ENCODE measurements at regions of chr4 and their contacts with region 1.

Region 1: DNA sequence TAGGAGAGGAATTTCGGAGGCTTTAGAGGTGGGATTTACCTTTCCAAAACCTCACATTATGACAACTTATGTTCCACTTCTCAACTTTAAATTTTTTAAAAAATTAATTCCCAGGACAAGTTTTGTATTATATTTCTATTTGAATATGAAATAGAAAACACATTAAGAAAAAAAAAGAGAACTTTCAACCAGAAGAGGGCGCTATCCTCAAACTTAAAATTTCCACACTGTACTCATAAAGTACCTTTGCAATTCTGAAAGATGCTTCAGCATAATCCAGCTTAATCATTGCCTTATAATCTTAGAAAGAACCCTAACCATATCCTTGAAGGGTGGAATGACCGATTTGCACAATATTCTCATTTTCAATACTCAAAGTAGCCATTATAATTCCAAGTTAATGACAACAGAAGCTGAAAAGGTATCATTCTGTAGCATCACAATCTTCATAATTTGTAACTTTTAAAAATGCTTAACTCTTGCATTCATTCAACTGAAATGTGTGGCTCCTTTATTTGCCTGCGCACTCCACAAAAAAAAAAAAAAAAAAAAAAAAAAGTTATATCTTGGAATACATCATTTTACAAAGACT is 158.0 kb downstream of the KCNIP4 start:
- DNase-seq: no peak
- H3K4me3 ChIP-seq: no peak overlapping the region
- H3K27ac ChIP-seq: no peak overlapping the region
- H3K4me1 ChIP-seq: no peaks in the 10 kb centered on the region
- H3K27me3 ChIP-seq: no peaks in the 10 kb centered on the region
- CTCF ChIP-seq: peak; percentile 22 to 52 (median 36)
- EP300 ChIP-seq: no peak
- POLR2A ChIP-seq: no peak

Region 2: GRCh38 chr4:21948347-21949072 is 158.0 kb after region 1 on chr4 and contains the start of gene KCNIP4:
- intact Hi-C with region 1: loop called (anchors 5 kb)
- DNase-seq: no peak
- H3K4me3 ChIP-seq: peak within 1 kb of the TSS; percentile 57 to 69 (median 60)
- H3K27ac ChIP-seq: peak within 1 kb of the TSS in 1 of 4 donors; percentile 56
- H3K4me1 ChIP-seq: peaks cover 0 to 13% (median 5%) of the 10 kb centered on the region in 4 donors
- H3K27me3 ChIP-seq: peaks cover 0 to 18% (median 0%) of the 10 kb centered on the region in 3 donors
- CTCF ChIP-seq: no peak
- EP300 ChIP-seq: no peak
- POLR2A ChIP-seq: no peak
- total RNA-seq, gene KCNIP4: 9.1 to 28.5 (median 19.4) TPM

Region 3: DNA sequence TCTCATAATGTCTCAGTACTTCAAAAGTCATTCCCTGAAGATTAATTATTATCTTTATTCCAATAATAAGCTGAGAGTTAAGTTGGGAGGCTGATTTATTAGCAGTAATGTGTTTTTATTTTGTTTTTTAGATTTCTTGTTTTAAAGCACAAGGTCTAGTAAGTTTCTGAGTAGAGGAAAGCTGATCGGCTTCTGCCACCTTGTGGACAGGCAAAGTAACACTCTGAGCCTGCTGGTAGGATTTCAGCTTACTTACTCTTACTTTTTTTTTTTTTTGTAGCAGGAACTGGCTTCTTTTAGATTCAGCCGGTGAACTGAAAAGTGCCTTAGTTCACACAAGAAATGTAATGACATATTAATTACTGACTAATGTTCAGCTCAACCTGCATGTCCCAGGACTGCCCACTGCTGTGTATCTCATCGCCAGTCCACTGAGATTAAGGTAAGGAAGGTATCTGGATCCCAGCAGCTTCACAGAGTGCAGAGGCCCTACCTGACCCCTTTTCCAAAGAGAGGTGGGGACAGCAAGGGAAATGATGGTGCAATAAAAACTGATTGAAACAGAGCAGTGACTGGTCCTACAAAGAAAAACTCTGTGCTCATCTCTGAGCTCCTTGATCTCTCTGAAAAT is 598.8 kb after region 1 on chr4:
- intact Hi-C with region 1: loop called (anchors 1 kb)
- DNase-seq: no peak
- H3K4me3 ChIP-seq: no peak overlapping the region
- H3K27ac ChIP-seq: no peak overlapping the region
- H3K4me1 ChIP-seq: peaks cover 0 to 16% (median 8%) of the 10 kb centered on the region in 4 donors
- H3K27me3 ChIP-seq: no peaks in the 10 kb centered on the region
- CTCF ChIP-seq: peak; percentile 52 to 80 (median 68)
- EP300 ChIP-seq: no peak
- POLR2A ChIP-seq: no peak

Region 4: GRCh38 chr4:22607382-22607781 is 816.8 kb after region 1 on chr4:
- intact Hi-C with region 1: loop called (anchors 10 kb)
- DNase-seq: peak; percentile 71
- H3K4me3 ChIP-seq: no peak overlapping the region
- H3K27ac ChIP-seq: no peak overlapping the region
- H3K4me1 ChIP-seq: no peaks in the 10 kb centered on the region
- H3K27me3 ChIP-seq: no peaks in the 10 kb centered on the region
- CTCF ChIP-seq: peak; percentile 33 to 71 (median 45)
- EP300 ChIP-seq: no peak
- POLR2A ChIP-seq: no peak

Region 5: GRCh38 chr4:22688236-22688635 is 897.7 kb after region 1 on chr4:
- intact Hi-C with region 1: loop called (anchors 1 kb)
- DNase-seq: no peak
- H3K4me3 ChIP-seq: no peak overlapping the region
- H3K27ac ChIP-seq: no peak overlapping the region
- H3K4me1 ChIP-seq: peaks cover 0 to 10% (median 2%) of the 10 kb centered on the region in 4 donors
- H3K27me3 ChIP-seq: no peaks in the 10 kb centered on the region
- CTCF ChIP-seq: no peak
- EP300 ChIP-seq: no peak
- POLR2A ChIP-seq: no peak

Measured in sigmoid colon (tissue), 7 donors.